ENCODE measurements at regions of chr3 and their contacts with region 1.

Region 1: DNA sequence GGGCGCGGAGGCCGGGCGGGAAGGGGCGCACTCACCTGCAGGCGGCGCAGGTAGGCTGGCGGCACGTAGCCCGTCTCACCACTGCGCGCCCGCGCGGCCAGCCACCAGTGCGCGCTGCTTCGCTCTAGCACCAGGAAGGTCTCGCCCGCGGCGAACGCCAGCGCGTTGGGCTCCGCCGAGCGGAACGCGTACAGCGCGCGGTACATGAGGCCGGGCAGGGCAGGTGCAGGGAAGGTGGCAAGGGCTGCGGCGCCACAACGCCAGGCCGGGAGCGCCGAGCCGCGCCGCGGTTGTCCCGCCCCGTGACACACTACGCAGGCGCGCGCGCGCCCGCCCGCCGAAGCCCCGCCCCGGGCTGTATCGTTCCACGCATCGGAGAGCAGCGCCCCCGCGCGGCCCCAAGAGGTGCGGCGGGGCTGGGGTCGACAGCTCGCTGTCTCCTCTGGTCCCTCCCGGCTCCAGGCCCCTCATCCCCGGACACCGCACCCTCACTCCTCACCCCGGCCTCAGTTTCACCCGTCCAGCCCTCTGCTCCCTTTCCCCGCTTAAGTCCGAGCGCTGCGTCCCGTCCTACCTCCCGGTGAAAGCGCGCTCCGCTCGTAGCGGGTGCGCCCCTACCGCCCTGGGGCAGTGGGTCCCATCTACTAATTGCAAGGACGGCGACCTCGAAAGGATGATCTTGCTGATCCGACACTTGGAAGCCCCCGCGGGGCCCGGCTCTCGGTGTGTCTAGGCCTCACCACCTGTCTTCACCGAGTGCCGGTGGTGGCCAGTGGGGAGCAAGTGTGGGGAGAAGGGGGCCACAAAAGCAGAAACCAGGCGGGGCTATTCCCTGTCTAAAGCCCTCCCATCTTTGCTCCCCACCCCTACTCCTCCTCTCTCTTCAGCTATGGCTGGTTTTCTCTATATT is at the start of gene NCKIPSD:
- DNase-seq: peak; percentile 83 to 96 (median 90)
- ATAC-seq: peak; percentile 90
- H3K4me3 ChIP-seq: peak within 1 kb of the TSS; percentile 69
- H3K4me3 Mint-ChIP-seq: peak within 1 kb of the TSS; percentile 97
- H3K27ac ChIP-seq: peak within 1 kb of the TSS; percentile 32 to 44
- H3K27ac Mint-ChIP-seq: peak within 1 kb of the TSS; percentile 79
- H3K4me1 ChIP-seq: peaks cover 31% of the 10 kb centered on the region
- H3K4me1 Mint-ChIP-seq: peaks cover 33% of the 10 kb centered on the region
- H3K27me3 ChIP-seq: no peaks in the 10 kb centered on the region
- H3K27me3 Mint-ChIP-seq: no peaks in the 10 kb centered on the region
- CTCF ChIP-seq: peak; percentile 83
- total RNA-seq, gene NCKIPSD: 9.7 to 10.8 TPM

Region 2: GRCh38 chr3:48400824-48401433 is 284.9 kb before region 1 on chr3:
- CTCF ChIA-PET with region 1: no interaction called
- POLR2A ChIA-PET with region 1: no interaction called
- intact Hi-C with region 1: loop called in 1 of 2 experiments (anchors 1 kb)
- DNase-seq: peak; percentile 45 to 88 (median 56)
- ATAC-seq: peak; percentile 82
- H3K4me3 ChIP-seq: no peak overlapping the region
- H3K4me3 Mint-ChIP-seq: no peak overlapping the region
- H3K27ac ChIP-seq: no peak overlapping the region
- H3K27ac Mint-ChIP-seq: no peak overlapping the region
- H3K4me1 ChIP-seq: no peaks in the 10 kb centered on the region
- H3K4me1 Mint-ChIP-seq: no peaks in the 10 kb centered on the region
- H3K27me3 ChIP-seq: no peaks in the 10 kb centered on the region
- H3K27me3 Mint-ChIP-seq: peaks cover 1% of the 10 kb centered on the region
- CTCF ChIP-seq: peak; percentile 93

Region 3: DNA sequence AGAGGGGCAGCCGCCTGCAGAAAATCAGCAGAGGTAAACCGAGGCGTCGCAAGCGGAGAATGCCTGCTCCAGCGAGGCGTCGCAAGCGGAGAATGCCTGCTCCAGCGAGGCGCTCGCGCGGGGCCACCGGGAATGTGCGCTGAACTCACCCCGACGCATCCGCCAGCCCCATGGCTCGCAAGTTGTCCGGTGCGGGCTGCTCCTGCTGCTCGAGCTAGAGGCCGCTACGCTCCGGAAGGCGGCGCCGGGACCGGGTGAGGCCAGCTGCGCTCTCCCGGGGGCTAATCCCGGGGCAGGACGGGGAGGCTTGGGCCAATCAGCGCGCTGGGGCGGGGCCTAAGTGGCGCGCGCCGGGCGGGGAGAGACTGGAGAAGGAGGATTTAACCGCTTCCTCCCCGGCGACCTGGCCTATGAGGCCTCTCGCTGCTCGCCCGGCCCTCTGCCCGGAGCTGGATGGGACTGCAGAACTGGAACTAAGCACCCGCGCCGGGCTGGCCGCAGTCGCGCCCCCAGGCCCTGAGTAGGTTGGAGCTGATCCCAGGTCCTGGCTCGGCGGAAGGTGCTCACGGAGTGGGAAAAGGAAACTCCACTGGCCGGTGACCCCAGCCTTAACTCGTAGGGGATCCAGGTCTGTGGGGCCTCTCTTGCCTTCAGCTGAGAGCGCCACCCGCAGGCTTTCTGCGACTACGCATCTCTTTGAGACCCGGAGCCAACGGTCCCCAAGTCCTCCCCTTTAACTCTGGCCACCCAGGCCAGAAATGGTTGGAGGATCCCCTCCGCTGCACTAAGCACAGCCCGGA is 50.4 kb before region 1 on chr3 and contains the start of gene SLC26A6:
- CTCF ChIA-PET with region 1: interaction called, 6 read pairs
- POLR2A ChIA-PET with region 1: interaction called, 5 read pairs
- intact Hi-C with region 1: loop called in 1 of 2 experiments (anchors 2 kb)
- DNase-seq: peak; percentile 80 to 95 (median 94)
- ATAC-seq: peak; percentile 98
- H3K4me3 ChIP-seq: peak within 1 kb of the TSS; percentile 87
- H3K4me3 Mint-ChIP-seq: peak within 1 kb of the TSS; percentile 88
- H3K27ac ChIP-seq: peak within 1 kb of the TSS in 1 of 2 donors; percentile 22
- H3K27ac Mint-ChIP-seq: no peak within 1 kb of the TSS
- H3K4me1 ChIP-seq: peaks cover 32% of the 10 kb centered on the region
- H3K4me1 Mint-ChIP-seq: peaks cover 19% of the 10 kb centered on the region
- H3K27me3 ChIP-seq: no peaks in the 10 kb centered on the region
- H3K27me3 Mint-ChIP-seq: no peaks in the 10 kb centered on the region
- CTCF ChIP-seq: no peak
- total RNA-seq, gene SLC26A6: 13.5 to 14.4 TPM

Region 4: GRCh38 chr3:48663415-48664312 is 22.2 kb before region 1 on chr3:
- CTCF ChIA-PET with region 1: interaction called, 4 read pairs
- POLR2A ChIA-PET with region 1: no interaction called
- intact Hi-C with region 1: loop called in 1 of 2 experiments (anchors 1 kb)
- DNase-seq: peak; percentile 62 to 94 (median 76)
- ATAC-seq: peak; percentile 72
- H3K4me3 ChIP-seq: peak overlapping the region; percentile 61
- H3K4me3 Mint-ChIP-seq: peak overlapping the region; percentile 76
- H3K27ac ChIP-seq: no peak overlapping the region
- H3K27ac Mint-ChIP-seq: no peak overlapping the region
- H3K4me1 ChIP-seq: peaks cover 36% of the 10 kb centered on the region
- H3K4me1 Mint-ChIP-seq: no peaks in the 10 kb centered on the region
- H3K27me3 ChIP-seq: peaks cover 37% of the 10 kb centered on the region in 2 experiments
- H3K27me3 Mint-ChIP-seq: peaks cover 47% of the 10 kb centered on the region
- CTCF ChIP-seq: peak; percentile 48

Region 5: GRCh38 chr3:48716982-48717746 is 31.3 kb after region 1 on chr3 and contains the start of gene IP6K2:
- CTCF ChIA-PET with region 1: interaction called, 5 read pairs
- POLR2A ChIA-PET with region 1: interaction called, 5 read pairs
- intact Hi-C with region 1: loop called in 1 of 2 experiments (anchors 2 kb)
- DNase-seq: peak; percentile 97 to 99 (median 98)
- ATAC-seq: peak; percentile 99
- H3K4me3 ChIP-seq: peak within 1 kb of the TSS; percentile 89
- H3K4me3 Mint-ChIP-seq: peak within 1 kb of the TSS; percentile 96
- H3K27ac ChIP-seq: peak within 1 kb of the TSS; percentile 77 to 88
- H3K27ac Mint-ChIP-seq: peak within 1 kb of the TSS; percentile 88
- H3K4me1 ChIP-seq: peaks cover 38% of the 10 kb centered on the region
- H3K4me1 Mint-ChIP-seq: peaks cover 43% of the 10 kb centered on the region
- H3K27me3 ChIP-seq: no peaks in the 10 kb centered on the region
- H3K27me3 Mint-ChIP-seq: no peaks in the 10 kb centered on the region
- CTCF ChIP-seq: no peak
- total RNA-seq, gene IP6K2: 97.2 to 121 TPM

Region 6: GRCh38 chr3:48952510-48953118 is 266.8 kb after region 1 on chr3:
- CTCF ChIA-PET with region 1: no interaction called
- POLR2A ChIA-PET with region 1: no interaction called
- intact Hi-C with region 1: loop called (anchors 5 kb)
- DNase-seq: peak; percentile 28 to 75 (median 48)
- ATAC-seq: peak; percentile 79
- H3K4me3 ChIP-seq: no peak overlapping the region
- H3K4me3 Mint-ChIP-seq: no peak overlapping the region
- H3K27ac ChIP-seq: no peak overlapping the region
- H3K27ac Mint-ChIP-seq: no peak overlapping the region
- H3K4me1 ChIP-seq: no peaks in the 10 kb centered on the region
- H3K4me1 Mint-ChIP-seq: peaks cover 25% of the 10 kb centered on the region
- H3K27me3 ChIP-seq: no peaks in the 10 kb centered on the region
- H3K27me3 Mint-ChIP-seq: no peaks in the 10 kb centered on the region
- CTCF ChIP-seq: peak; percentile 57

Region 7: GRCh38 chr3:50503504-50504342 is 1817.9 kb after region 1 on chr3 and contains the start of gene CACNA2D2:
- CTCF ChIA-PET with region 1: no interaction called
- POLR2A ChIA-PET with region 1: no interaction called
- intact Hi-C with region 1: loop called in 1 of 2 experiments (anchors 10 kb)
- DNase-seq: peak; percentile 39 to 83 (median 69)
- ATAC-seq: peak; percentile 94
- H3K4me3 ChIP-seq: peak within 1 kb of the TSS; percentile 48
- H3K4me3 Mint-ChIP-seq: peak within 1 kb of the TSS; percentile 83
- H3K27ac ChIP-seq: no peak within 1 kb of the TSS
- H3K27ac Mint-ChIP-seq: no peak within 1 kb of the TSS
- H3K4me1 ChIP-seq: peaks cover 16% of the 10 kb centered on the region
- H3K4me1 Mint-ChIP-seq: peaks cover 6% of the 10 kb centered on the region
- H3K27me3 ChIP-seq: peaks cover 3 to 17% of the 10 kb centered on the region in 2 experiments
- H3K27me3 Mint-ChIP-seq: peaks cover 21% of the 10 kb centered on the region
- CTCF ChIP-seq: no peak
- total RNA-seq, gene CACNA2D2: 2.5 to 3.8 TPM

Measured in CD4-positive, alpha-beta T cell (primary cell).